Activated B cell treated with CpG ODN at 0.5 μM for 24 hours (primary cell): ENCODE measurements at regions of chr7 and their contacts with region 1.

Region 1: DNA sequence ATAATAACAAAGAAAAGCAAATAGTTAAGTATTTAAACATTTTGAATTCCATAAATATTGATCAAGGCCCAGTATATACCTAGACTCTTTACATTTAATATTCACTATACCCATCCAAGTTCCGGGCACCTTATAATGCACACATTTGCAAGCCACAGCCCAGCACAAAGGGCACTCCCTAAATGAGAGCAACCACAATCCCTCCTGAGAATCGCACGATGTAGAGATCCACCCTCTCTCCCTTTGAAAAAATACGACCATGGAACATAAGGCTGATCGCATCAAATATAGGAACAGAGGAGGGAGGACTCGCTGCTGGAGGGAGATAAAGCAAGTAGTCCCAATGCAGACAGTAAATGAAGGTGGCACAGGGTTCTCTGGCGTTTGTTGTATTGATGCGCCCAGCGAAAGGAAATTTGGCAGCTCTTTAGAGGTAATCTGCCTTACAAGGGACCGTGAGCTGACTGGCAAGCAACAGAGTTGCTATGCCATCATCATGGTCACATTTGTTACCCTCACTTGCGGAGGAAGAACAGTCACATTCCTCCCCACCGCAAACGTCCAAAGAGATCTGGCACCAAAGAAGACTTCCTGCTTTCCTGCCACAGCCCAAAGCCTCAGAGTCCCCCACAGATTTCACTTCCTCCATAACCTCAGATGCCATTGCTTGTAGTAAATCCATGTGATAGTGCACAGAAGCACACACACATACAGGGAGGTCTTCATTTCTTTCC is 16.1 kb upstream of the TAS2R40 start:
- DNase-seq: peak; percentile 33
- ATAC-seq: peak; percentile 91
- H3K4me3 Mint-ChIP-seq: peak overlapping the region; percentile 65
- H3K27ac Mint-ChIP-seq: peak overlapping the region; percentile 79
- H3K4me1 Mint-ChIP-seq: peaks cover 42% of the 10 kb centered on the region
- H3K27me3 Mint-ChIP-seq: no peaks in the 10 kb centered on the region
- CTCF ChIP-seq: no peak

Region 2: DNA sequence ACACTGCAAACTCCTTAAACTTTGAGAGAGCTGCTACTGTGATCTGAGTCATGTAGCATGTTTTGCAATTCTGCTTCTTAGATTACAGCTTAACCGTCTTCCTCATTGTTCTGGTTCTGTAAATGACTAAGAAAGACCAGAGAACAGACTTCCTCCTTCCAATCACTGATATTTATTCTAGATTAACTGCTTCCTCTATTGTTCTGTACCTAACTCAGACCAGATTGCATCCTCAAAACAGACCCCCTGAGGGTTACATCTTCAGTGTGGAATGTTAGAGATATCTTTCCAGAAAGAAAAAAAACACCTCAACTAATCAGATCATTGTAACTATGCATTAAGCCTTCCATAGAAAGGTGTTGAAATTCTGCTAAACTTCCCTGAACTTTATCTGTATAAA is 79.6 kb before region 1 on chr7:
- CTCF ChIA-PET with region 1: no interaction called
- POLR2A ChIA-PET with region 1: no interaction called
- intact Hi-C with region 1: loop called (anchors 1 kb)
- DNase-seq: no peak
- ATAC-seq: peak; percentile 87
- H3K4me3 Mint-ChIP-seq: no peak overlapping the region
- H3K27ac Mint-ChIP-seq: peak overlapping the region; percentile 6
- H3K4me1 Mint-ChIP-seq: peaks cover 28% of the 10 kb centered on the region
- H3K27me3 Mint-ChIP-seq: no peaks in the 10 kb centered on the region
- CTCF ChIP-seq: no peak

Region 3: GRCh38 chr7:143172354-143172753 is 33.4 kb before region 1 on chr7:
- CTCF ChIA-PET with region 1: no interaction called
- POLR2A ChIA-PET with region 1: no interaction called
- intact Hi-C with region 1: loop called (anchors 5 kb)
- DNase-seq: no peak
- ATAC-seq: no peak
- H3K4me3 Mint-ChIP-seq: peak overlapping the region; percentile 36
- H3K27ac Mint-ChIP-seq: no peak overlapping the region
- H3K4me1 Mint-ChIP-seq: peaks cover 27% of the 10 kb centered on the region
- H3K27me3 Mint-ChIP-seq: no peaks in the 10 kb centered on the region
- CTCF ChIP-seq: no peak